CD8-positive, alpha-beta T cell (primary cell): ENCODE measurements at regions of chr4 and their contacts with region 1.

Region 1: GRCh38 chr4:169010125-169011023 is at the start of gene CBR4:
- DNase-seq: peak; percentile 89 to 100 (median 96)
- ATAC-seq: peak; percentile 94
- H3K4me3 ChIP-seq: peak within 1 kb of the TSS; percentile 73 to 96
- H3K4me3 Mint-ChIP-seq: peak within 1 kb of the TSS; percentile 97
- H3K27ac ChIP-seq: peak within 1 kb of the TSS; percentile 85
- H3K27ac Mint-ChIP-seq: peak within 1 kb of the TSS; percentile 96
- H3K4me1 ChIP-seq: peaks cover 23% of the 10 kb centered on the region
- H3K4me1 Mint-ChIP-seq: peaks cover 41% of the 10 kb centered on the region
- H3K27me3 ChIP-seq: no peaks in the 10 kb centered on the region
- H3K27me3 Mint-ChIP-seq: peaks cover 2% of the 10 kb centered on the region
- CTCF ChIP-seq: peak; percentile 55
- total RNA-seq, gene CBR4: 4.6 to 6.0 TPM

Region 2: GRCh38 chr4:168318266-168318895 is 692.0 kb before region 1 on chr4 and contains the start of gene DDX60:
- CTCF ChIA-PET with region 1: no interaction called
- POLR2A ChIA-PET with region 1: interaction called, 3 read pairs
- intact Hi-C with region 1: loop called in 1 of 2 experiments (anchors 2 kb)
- DNase-seq: peak; percentile 65 to 96 (median 85)
- ATAC-seq: peak; percentile 94
- H3K4me3 ChIP-seq: peak within 1 kb of the TSS; percentile 95 to 100
- H3K4me3 Mint-ChIP-seq: peak within 1 kb of the TSS; percentile 98
- H3K27ac ChIP-seq: peak within 1 kb of the TSS; percentile 99
- H3K27ac Mint-ChIP-seq: peak within 1 kb of the TSS; percentile 99
- H3K4me1 ChIP-seq: peaks cover 24% of the 10 kb centered on the region
- H3K4me1 Mint-ChIP-seq: peaks cover 43% of the 10 kb centered on the region
- H3K27me3 ChIP-seq: no peaks in the 10 kb centered on the region
- H3K27me3 Mint-ChIP-seq: no peaks in the 10 kb centered on the region
- CTCF ChIP-seq: no peak
- total RNA-seq, gene DDX60: 8.2 to 10.1 TPM

Region 3: GRCh38 chr4:168514249-168514852 is 496.0 kb before region 1 on chr4:
- CTCF ChIA-PET with region 1: no interaction called
- POLR2A ChIA-PET with region 1: no interaction called
- intact Hi-C with region 1: loop called in 1 of 2 experiments (anchors 10 kb)
- DNase-seq: peak in 2 of 9 experiments; percentile 40 to 58
- ATAC-seq: no peak
- H3K4me3 ChIP-seq: no peak overlapping the region
- H3K4me3 Mint-ChIP-seq: no peak overlapping the region
- H3K27ac ChIP-seq: no peak overlapping the region
- H3K27ac Mint-ChIP-seq: no peak overlapping the region
- H3K4me1 ChIP-seq: peaks cover 27% of the 10 kb centered on the region
- H3K4me1 Mint-ChIP-seq: peaks cover 37% of the 10 kb centered on the region
- H3K27me3 ChIP-seq: no peaks in the 10 kb centered on the region
- H3K27me3 Mint-ChIP-seq: no peaks in the 10 kb centered on the region
- CTCF ChIP-seq: peak; percentile 61

Region 4: DNA sequence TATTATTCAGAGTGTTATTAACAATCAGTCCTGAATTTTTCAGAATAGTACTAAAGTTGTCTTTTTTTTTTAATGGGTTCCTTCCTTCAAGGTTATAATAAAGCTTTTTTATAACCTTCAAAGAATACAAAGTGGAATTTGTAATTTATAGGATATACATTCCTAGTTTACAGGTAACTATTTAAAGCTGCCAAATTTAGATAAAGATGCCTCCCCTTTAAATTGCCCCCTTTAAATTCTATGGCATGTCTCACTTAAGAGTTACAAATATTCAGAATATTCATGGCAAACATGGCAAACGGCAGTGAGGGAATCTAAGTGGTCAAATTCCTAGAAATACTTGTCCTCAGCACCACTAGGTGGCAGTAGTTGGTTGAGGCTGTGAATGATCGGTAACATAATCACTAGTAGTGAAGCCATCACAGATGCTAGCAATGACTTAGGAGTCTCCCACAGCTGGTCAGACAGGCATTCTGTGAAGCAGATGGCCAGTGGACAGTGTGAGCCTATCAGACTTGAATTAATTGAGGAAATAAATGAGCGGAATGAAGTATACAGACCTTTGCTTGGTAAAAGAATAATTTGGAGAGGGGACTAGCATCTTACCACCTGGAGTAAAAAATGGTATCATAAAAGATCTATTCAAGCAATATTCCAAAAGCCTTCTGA is 86.7 kb before region 1 on chr4:
- CTCF ChIA-PET with region 1: interaction called, 11 read pairs
- POLR2A ChIA-PET with region 1: no interaction called
- intact Hi-C with region 1: loop called (anchors 2 kb)
- DNase-seq: peak; percentile 5 to 77 (median 49)
- ATAC-seq: peak; percentile 49
- H3K4me3 ChIP-seq: no peak overlapping the region
- H3K4me3 Mint-ChIP-seq: no peak overlapping the region
- H3K27ac ChIP-seq: no peak overlapping the region
- H3K27ac Mint-ChIP-seq: no peak overlapping the region
- H3K4me1 ChIP-seq: no peaks in the 10 kb centered on the region
- H3K4me1 Mint-ChIP-seq: no peaks in the 10 kb centered on the region
- H3K27me3 ChIP-seq: no peaks in the 10 kb centered on the region
- H3K27me3 Mint-ChIP-seq: no peaks in the 10 kb centered on the region
- CTCF ChIP-seq: peak; percentile 77

Region 5: GRCh38 chr4:168955674-168956073 is 54.7 kb before region 1 on chr4:
- CTCF ChIA-PET with region 1: no interaction called
- POLR2A ChIA-PET with region 1: no interaction called
- intact Hi-C with region 1: no loop called
- DNase-seq: no peak
- ATAC-seq: no peak
- H3K4me3 ChIP-seq: no peak overlapping the region
- H3K4me3 Mint-ChIP-seq: no peak overlapping the region
- H3K27ac ChIP-seq: no peak overlapping the region
- H3K27ac Mint-ChIP-seq: no peak overlapping the region
- H3K4me1 ChIP-seq: no peaks in the 10 kb centered on the region
- H3K4me1 Mint-ChIP-seq: no peaks in the 10 kb centered on the region
- H3K27me3 ChIP-seq: no peaks in the 10 kb centered on the region
- H3K27me3 Mint-ChIP-seq: no peaks in the 10 kb centered on the region
- CTCF ChIP-seq: no peak

Region 6: DNA sequence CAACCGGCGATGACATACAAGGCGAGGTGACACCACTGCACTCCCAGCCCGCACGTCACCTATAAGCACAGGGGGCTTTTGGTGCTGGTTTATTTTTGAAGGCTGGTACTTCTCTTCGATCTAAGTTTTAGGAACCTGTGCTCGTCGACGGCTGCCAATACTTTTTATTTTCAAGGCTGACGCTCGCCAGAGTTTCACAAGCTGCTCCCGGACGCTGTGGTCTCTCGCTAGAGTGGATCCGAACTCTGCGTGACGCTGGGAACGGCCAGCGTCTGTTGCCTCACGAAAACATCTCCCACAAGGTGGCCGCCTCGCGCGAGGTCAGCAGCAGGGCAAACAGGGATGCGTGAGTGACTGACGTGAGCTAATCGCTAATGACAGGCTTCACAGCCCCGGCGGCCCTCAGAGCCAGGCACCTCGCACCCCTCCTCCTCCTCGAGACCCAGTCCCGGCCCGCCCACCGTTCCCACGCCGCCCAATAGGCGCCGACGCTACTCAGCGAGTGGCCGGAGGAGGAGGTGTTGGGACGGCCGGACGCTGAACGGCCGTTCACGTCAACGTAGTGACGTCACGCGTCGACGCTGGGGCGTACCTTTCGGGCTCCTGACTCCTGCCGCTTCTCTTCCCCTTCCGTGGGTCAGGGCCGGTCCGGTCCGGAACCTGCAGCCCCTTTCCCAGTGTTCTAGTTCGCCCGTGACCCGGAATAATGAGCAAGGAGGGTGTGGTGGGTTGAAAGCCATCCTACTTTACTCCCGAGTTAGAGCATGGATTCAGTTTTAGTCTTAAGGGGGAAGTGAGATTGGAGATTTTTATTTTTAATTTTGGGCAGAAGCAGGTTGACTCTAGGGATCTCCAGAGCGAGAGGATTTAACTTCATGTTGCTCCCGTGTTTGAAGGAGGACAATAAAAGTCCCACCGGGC is 609.8 kb after region 1 on chr4 and contains the start of gene CLCN3:
- CTCF ChIA-PET with region 1: no interaction called
- POLR2A ChIA-PET with region 1: interaction called, 5 read pairs
- intact Hi-C with region 1: loop called in 1 of 2 experiments (anchors 1 kb)
- DNase-seq: peak; percentile 81 to 96 (median 93)
- ATAC-seq: peak; percentile 70
- H3K4me3 ChIP-seq: peak within 1 kb of the TSS; percentile 77 to 98
- H3K4me3 Mint-ChIP-seq: peak within 1 kb of the TSS; percentile 91
- H3K27ac ChIP-seq: peak within 1 kb of the TSS; percentile 92 to 99
- H3K27ac Mint-ChIP-seq: peak within 1 kb of the TSS; percentile 99
- H3K4me1 ChIP-seq: peaks cover 44% of the 10 kb centered on the region
- H3K4me1 Mint-ChIP-seq: peaks cover 62% of the 10 kb centered on the region
- H3K27me3 ChIP-seq: no peaks in the 10 kb centered on the region
- H3K27me3 Mint-ChIP-seq: no peaks in the 10 kb centered on the region
- CTCF ChIP-seq: no peak
- total RNA-seq, gene CLCN3: 10.2 to 10.9 TPM

Region 7: DNA sequence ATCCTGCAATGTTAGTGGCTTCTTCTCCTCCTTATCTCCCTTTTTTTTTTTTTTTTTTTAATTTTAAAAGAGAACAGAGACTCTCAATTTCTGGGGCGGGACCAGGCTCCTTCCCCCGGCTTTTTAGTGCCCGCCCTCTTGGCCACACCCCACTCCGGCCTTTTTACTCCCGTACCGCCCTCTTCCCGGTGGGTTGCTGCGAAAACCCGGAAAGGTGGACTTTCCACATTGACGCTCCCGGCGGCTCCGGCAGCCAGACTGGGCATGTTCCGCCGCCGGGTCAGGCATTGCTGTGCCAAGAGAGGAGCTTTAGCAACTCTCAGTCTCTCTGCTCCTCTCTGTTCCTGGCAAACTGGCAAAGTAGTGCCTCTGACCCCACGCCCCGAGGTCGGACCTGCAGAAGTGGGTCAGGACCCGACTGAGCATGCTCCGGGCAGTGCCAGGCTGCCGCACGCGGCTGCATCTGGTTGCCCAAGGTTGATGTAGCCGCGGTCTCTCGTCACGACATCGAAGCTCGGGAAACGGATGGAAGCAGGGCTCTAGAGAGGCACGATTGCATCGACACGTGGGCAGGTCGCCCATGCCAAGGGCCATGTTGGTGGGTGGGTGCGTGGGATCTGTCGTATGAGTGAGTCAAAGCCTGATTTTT is 1016.9 kb after region 1 on chr4:
- CTCF ChIA-PET with region 1: no interaction called
- POLR2A ChIA-PET with region 1: interaction called, 4 read pairs
- intact Hi-C with region 1: loop called (anchors 2 kb)
- DNase-seq: peak; percentile 77 to 94 (median 87)
- ATAC-seq: peak; percentile 76
- H3K4me3 ChIP-seq: peak overlapping the region; percentile 84
- H3K4me3 Mint-ChIP-seq: peak overlapping the region; percentile 93
- H3K27ac ChIP-seq: peak overlapping the region; percentile 6 to 65
- H3K27ac Mint-ChIP-seq: peak overlapping the region; percentile 60
- H3K4me1 ChIP-seq: peaks cover 5% of the 10 kb centered on the region
- H3K4me1 Mint-ChIP-seq: peaks cover 17% of the 10 kb centered on the region
- H3K27me3 ChIP-seq: peaks cover 0 to 5% of the 10 kb centered on the region in 2 experiments
- H3K27me3 Mint-ChIP-seq: peaks cover 7% of the 10 kb centered on the region
- CTCF ChIP-seq: no peak